Activated CD4-positive, alpha-beta memory T cell treated with anti-CD3 and anti-CD28 coated beads for 36 hours (primary cell): ENCODE measurements at regions of chr17 and their contacts with region 1.

Region 1: GRCh38 chr17:15502369-15503112 is 35.1 kb upstream of the CDRT4 start:
- DNase-seq: peak; percentile 84
- H3K4me3 Mint-ChIP-seq: no peak overlapping the region
- H3K27ac Mint-ChIP-seq: no peak overlapping the region
- H3K4me1 Mint-ChIP-seq: peaks cover 5% of the 10 kb centered on the region
- H3K27me3 Mint-ChIP-seq: no peaks in the 10 kb centered on the region

Region 2: DNA sequence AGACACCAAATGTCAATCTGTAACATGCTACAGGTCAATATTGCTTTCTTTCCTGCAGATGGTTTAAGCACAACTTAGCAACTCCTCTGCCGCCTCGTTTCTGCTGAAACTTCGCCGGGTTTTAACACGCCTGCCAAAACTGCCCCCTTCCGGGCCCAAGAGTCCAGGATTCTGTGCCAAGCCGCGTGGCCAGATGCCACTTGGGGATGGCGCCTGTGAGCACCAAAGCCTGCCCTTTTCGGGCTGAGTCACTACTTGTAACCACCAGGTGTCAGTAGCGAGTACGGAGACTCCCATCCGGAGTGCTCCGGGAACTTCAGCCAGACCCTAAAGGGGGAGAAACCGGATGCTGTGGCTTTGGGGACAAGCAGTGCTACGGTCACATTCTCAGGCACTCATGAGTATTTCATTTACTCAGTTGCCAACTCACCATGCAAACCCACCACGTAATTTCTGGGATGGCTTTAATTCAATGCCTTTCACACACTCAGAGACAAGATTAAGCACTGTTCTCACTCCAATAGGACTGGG is 245.2 kb before region 1 on chr17:
- CTCF ChIA-PET with region 1: interaction called, 84 read pairs
- POLR2A ChIA-PET with region 1: no interaction called
- intact Hi-C with region 1: loop called (anchors 1 kb)
- DNase-seq: peak; percentile 78
- H3K4me3 Mint-ChIP-seq: no peak overlapping the region
- H3K27ac Mint-ChIP-seq: no peak overlapping the region
- H3K4me1 Mint-ChIP-seq: peaks cover 16% of the 10 kb centered on the region
- H3K27me3 Mint-ChIP-seq: peaks cover 57% of the 10 kb centered on the region

Region 3: GRCh38 chr17:15307710-15308111 is 194.8 kb before region 1 on chr17:
- CTCF ChIA-PET with region 1: no interaction called
- POLR2A ChIA-PET with region 1: no interaction called
- intact Hi-C with region 1: no loop called
- DNase-seq: no peak
- H3K4me3 Mint-ChIP-seq: no peak overlapping the region
- H3K27ac Mint-ChIP-seq: no peak overlapping the region
- H3K4me1 Mint-ChIP-seq: no peaks in the 10 kb centered on the region
- H3K27me3 Mint-ChIP-seq: peaks cover 3% of the 10 kb centered on the region

Region 4: DNA sequence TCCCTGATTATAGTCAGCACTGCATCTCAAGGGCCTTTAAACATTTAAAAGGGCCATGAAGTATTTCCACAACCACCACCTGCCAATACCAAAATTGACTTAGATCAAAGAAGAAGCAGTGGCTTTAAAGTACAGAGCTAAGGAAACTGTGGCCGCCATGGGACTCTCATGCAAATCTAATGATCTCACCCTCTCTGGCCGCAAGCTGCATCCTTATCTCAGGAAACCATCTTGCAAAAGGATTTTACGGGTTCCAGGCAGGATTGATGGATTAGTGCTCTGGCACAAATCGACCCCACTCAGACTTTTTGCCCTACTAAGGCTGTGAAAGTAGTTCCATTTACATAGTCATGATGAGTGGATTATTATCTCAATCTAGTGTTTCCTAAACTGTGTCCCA is 57.7 kb before region 1 on chr17:
- CTCF ChIA-PET with region 1: no interaction called
- POLR2A ChIA-PET with region 1: no interaction called
- intact Hi-C with region 1: no loop called
- DNase-seq: peak; percentile 8
- H3K4me3 Mint-ChIP-seq: no peak overlapping the region
- H3K27ac Mint-ChIP-seq: no peak overlapping the region
- H3K4me1 Mint-ChIP-seq: peaks cover 11% of the 10 kb centered on the region
- H3K27me3 Mint-ChIP-seq: no peaks in the 10 kb centered on the region